HepG2 (cell line): ENCODE measurements at regions of chr11 and their contacts with region 1.

Region 1: DNA sequence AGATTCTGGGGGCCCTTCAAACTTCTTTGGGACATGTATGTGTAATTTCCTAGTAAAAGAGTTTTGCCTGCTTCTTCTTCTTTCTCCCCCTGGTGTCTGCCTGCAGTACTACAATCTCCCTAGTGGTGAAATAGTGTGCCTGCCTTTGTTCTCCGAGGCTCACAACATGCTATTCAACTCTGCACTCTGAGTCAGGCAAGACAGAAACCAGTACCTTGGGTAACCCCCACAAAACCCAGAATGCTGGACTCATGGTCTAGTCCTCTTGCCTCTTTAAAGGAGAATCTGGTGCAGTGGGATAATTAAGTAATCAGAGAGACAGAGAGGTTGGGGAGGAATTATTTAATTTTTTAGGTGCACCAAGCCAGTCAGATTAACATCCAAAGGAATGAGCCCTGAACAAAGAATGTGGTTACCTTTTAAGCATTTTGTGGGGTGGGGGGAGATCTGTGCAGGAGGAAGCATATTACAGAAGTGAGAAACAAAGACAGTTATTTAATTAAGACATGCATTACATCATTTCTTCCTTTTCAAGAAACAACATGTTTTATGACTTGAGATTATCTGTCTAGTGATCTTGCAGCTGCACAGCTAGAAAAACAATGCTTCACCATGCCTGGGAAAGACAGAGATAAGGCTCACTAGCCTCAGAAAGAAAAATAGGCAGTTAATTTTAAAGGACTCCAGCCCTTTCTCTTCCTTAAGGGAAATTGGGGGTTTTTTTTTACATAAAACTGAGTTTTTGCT is 11.0 kb upstream of the MS4A6A start:
- DNase-seq: peak; percentile 58
- ATAC-seq: peak; percentile 88
- H3K4me3 ChIP-seq: no peak overlapping the region
- H3K27ac ChIP-seq: no peak overlapping the region
- H3K4me1 ChIP-seq: no peaks in the 10 kb centered on the region
- H3K27me3 ChIP-seq: no peaks in the 10 kb centered on the region; a peak in 1 of 5 replicates
- CTCF ChIP-seq: peak; percentile 61
- EP300 ChIP-seq: no peak
- POLR2A ChIP-seq: no peak
- RAD21 ChIP-seq: no peak

Region 2: GRCh38 chr11:60169264-60169915 is 24.5 kb before region 1 on chr11:
- CTCF ChIA-PET with region 1: interaction called, 4 read pairs
- POLR2A ChIA-PET with region 1: no interaction called
- in situ Hi-C with region 1: no loop called
- intact Hi-C with region 1: loop called (anchors 2 kb)
- DNase-seq: peak; percentile 33
- ATAC-seq: no peak
- H3K4me3 ChIP-seq: no peak overlapping the region
- H3K27ac ChIP-seq: no peak overlapping the region
- H3K4me1 ChIP-seq: no peaks in the 10 kb centered on the region
- H3K27me3 ChIP-seq: no peaks in the 10 kb centered on the region
- CTCF ChIP-seq: peak; percentile 26; the same call in 1 of the 2 replicates
- EP300 ChIP-seq: no peak
- POLR2A ChIP-seq: no peak
- RAD21 ChIP-seq: no peak

Region 3: GRCh38 chr11:60363542-60364510 is 170.0 kb after region 1 on chr11:
- CTCF ChIA-PET with region 1: no interaction called
- POLR2A ChIA-PET with region 1: no interaction called
- in situ Hi-C with region 1: no loop called
- intact Hi-C with region 1: no loop called
- DNase-seq: peak; percentile 58
- ATAC-seq: peak; percentile 79
- H3K4me3 ChIP-seq: no peak overlapping the region
- H3K27ac ChIP-seq: no peak overlapping the region
- H3K4me1 ChIP-seq: no peaks in the 10 kb centered on the region
- H3K27me3 ChIP-seq: peaks cover 0 to 3% of the 10 kb centered on the region in 2 experiments; a peak in 1 of 5 replicates
- CTCF ChIP-seq: peak; percentile 78
- EP300 ChIP-seq: no peak
- POLR2A ChIP-seq: no peak
- RAD21 ChIP-seq: no peak